HAP-1 (cell line): ENCODE measurements at regions of chr15 and their contacts with region 1.

Region 1: DNA sequence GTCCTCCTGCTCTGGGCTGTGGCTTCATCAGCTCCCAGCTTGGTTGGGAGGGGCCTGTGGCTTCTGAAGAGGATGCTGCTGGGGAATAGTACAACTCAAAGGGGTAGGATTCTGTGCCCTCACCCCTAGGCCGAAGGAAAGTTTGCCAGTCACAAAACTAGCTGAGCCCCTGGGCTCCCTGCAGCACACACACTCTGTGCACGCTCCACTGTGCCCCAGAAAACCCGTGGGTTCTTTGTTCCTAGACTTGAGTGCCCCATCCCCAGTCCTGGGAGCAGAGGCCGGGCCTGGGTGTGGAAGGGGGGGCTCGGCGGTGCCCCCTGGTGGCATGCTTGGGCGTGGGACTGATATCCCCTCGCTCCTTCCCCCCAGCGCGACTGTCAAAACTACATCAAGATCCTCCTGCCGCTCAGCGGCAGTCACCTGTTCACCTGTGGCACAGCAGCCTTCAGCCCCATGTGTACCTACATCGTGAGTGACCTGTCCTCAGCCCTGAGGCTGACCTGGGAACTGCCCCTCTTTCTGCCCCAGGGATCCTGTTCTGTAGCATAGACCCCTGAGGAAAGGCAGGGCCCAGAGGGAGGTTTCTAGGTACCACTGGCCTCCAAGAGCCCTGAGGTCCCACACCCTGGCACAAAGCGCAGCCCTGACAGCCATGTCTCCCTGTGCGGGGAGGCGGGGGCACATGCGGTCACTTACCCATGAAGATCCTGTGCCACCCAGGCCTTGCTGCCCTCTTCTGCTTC is 14.1 kb downstream of the CIB1 start:
- DNase-seq: peak in 1 of 2 experiments; percentile 70
- H3K4me3 ChIP-seq: no peak overlapping the region
- H3K4me1 ChIP-seq: no peaks in the 10 kb centered on the region
- H3K27me3 ChIP-seq: no peaks in the 10 kb centered on the region

Region 2: GRCh38 chr15:90161950-90162361 is 57.6 kb before region 1 on chr15:
- in situ Hi-C with region 1: loop called (anchors 5 kb)
- DNase-seq: no peak
- H3K4me3 ChIP-seq: no peak overlapping the region
- H3K4me1 ChIP-seq: peaks cover 5% of the 10 kb centered on the region
- H3K27me3 ChIP-seq: no peaks in the 10 kb centered on the region

Region 3: GRCh38 chr15:90436952-90437351 is 217.4 kb after region 1 on chr15:
- in situ Hi-C with region 1: no loop called
- DNase-seq: no peak
- H3K4me3 ChIP-seq: no peak overlapping the region
- H3K4me1 ChIP-seq: no peaks in the 10 kb centered on the region
- H3K27me3 ChIP-seq: no peaks in the 10 kb centered on the region

Region 4: GRCh38 chr15:91032919-91033803 is 813.6 kb after region 1 on chr15:
- in situ Hi-C with region 1: no loop called
- DNase-seq: peak in 1 of 2 experiments; percentile 77
- H3K4me3 ChIP-seq: no peak overlapping the region
- H3K4me1 ChIP-seq: no peaks in the 10 kb centered on the region
- H3K27me3 ChIP-seq: peaks cover 17% of the 10 kb centered on the region